CD4-positive, alpha-beta memory T cell (primary cell): ENCODE measurements at regions of chr1 and their contacts with region 1.

Region 1: DNA sequence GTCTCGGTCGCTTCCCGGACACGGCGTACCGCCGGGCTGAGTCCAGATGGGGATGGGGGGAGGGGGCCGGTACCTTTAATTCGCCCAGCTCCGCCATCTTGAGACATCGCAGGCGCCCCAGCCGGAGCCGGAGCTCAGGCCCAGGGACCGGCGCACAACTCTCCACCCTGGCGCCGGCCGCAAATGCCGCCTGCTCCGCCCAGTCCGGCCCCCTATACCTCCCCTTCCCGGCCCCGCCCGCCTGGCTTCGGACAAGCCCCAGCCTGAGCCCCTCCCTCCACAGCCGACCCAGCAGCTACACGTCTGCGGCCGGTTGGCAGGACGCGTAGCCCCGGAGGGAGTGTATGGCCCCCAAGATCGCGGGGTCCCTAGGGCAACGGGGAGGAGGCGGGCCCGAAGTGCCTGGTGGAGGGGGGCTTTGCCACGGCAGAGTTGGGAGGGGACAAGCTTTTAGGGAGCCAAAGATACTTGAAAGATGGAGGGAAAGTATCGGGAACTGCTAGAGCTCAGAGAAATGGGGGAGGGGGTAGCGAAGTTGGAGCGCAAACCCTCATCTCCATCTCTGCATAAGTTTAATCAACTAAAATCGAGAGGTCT is at the start of gene PIAS3:
- DNase-seq: peak; percentile 76 to 84 (median 80)
- H3K4me3 ChIP-seq: peak within 1 kb of the TSS; percentile 90 to 96
- H3K4me3 Mint-ChIP-seq: peak within 1 kb of the TSS; percentile 92 to 97 (median 96)
- H3K27ac ChIP-seq: peak within 1 kb of the TSS; percentile 74
- H3K27ac Mint-ChIP-seq: peak within 1 kb of the TSS; percentile 89 to 97 (median 90)
- H3K4me1 ChIP-seq: peaks cover 17% of the 10 kb centered on the region
- H3K4me1 Mint-ChIP-seq: peaks cover 8 to 29% (median 19%) of the 10 kb centered on the region in 4 donors
- H3K27me3 ChIP-seq: no peaks in the 10 kb centered on the region
- H3K27me3 Mint-ChIP-seq: peaks cover 0 to 2% of the 10 kb centered on the region in 2 donors
- total RNA-seq, gene PIAS3: 30.3 to 33.6 TPM

Region 2: GRCh38 chr1:145751491-145752037 is 107.4 kb before region 1 on chr1:
- CTCF ChIA-PET with region 1: no interaction called
- POLR2A ChIA-PET with region 1: no interaction called
- intact Hi-C with region 1: no loop called
- DNase-seq: peak in 1 of 5 donors; percentile 27
- H3K4me3 ChIP-seq: no peak overlapping the region
- H3K4me3 Mint-ChIP-seq: no peak overlapping the region
- H3K27ac ChIP-seq: no peak overlapping the region
- H3K27ac Mint-ChIP-seq: peak overlapping the region in 2 of 7 donors; percentile 27 to 42
- H3K4me1 ChIP-seq: no peaks in the 10 kb centered on the region
- H3K4me1 Mint-ChIP-seq: no peaks in the 10 kb centered on the region
- H3K27me3 ChIP-seq: no peaks in the 10 kb centered on the region
- H3K27me3 Mint-ChIP-seq: no peaks in the 10 kb centered on the region

Region 3: DNA sequence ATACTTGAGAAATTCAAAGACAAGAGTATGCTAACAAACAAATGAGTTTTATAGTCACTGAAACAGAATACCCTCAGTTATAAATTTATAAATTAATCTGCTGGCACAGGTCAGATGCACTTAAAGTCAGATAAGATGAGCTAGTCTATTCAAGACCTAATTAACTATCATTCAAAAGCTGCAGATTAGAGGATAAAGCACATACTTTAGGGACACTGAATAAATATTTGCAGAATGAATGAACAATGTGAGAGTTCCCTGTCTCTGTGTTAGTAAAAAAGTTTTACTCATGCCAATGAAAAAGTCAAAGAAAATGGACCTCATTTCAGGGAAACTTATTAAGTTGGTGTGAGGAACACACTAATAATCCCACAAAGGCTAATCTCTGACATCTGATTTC is 93.4 kb before region 1 on chr1:
- CTCF ChIA-PET with region 1: no interaction called
- POLR2A ChIA-PET with region 1: no interaction called
- intact Hi-C with region 1: no loop called
- DNase-seq: no peak
- H3K4me3 ChIP-seq: no peak overlapping the region
- H3K4me3 Mint-ChIP-seq: no peak overlapping the region
- H3K27ac ChIP-seq: no peak overlapping the region
- H3K27ac Mint-ChIP-seq: no peak overlapping the region
- H3K4me1 ChIP-seq: no peaks in the 10 kb centered on the region
- H3K4me1 Mint-ChIP-seq: peaks cover 0 to 3% (median 0%) of the 10 kb centered on the region in 4 donors
- H3K27me3 ChIP-seq: no peaks in the 10 kb centered on the region
- H3K27me3 Mint-ChIP-seq: no peaks in the 10 kb centered on the region

Region 4: DNA sequence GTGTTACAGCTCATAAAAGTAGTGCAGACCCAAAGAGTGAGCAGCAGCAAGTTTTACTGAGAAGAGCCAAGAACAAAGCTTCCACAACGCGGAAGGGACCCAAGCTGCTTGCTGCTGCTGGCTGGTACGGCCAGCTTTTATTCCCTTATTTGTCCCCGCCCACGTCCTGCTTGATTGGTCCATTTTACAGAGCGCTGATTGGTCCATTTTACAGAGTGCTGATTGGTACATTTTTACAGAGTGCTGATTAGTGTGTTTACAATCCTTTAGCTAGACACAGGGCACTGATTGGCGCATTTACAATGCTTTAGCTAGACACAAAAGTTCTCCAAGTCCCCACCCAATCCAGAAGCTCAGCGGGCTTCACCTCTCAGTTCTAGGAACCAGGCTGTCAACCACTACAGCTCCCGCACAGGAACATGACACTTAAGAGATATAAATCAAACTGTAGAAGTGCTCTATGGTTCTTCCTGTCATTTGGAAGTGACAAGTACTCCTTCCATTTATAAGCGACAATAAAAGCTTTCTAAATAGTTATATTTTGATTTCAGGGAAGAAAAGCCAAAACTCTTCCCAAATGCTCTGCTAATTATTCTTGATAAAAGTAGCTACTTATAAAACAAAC is 63.6 kb before region 1 on chr1:
- CTCF ChIA-PET with region 1: no interaction called
- POLR2A ChIA-PET with region 1: no interaction called
- intact Hi-C with region 1: no loop called
- DNase-seq: peak in 1 of 5 donors; percentile 28
- H3K4me3 ChIP-seq: no peak overlapping the region
- H3K4me3 Mint-ChIP-seq: no peak overlapping the region
- H3K27ac ChIP-seq: no peak overlapping the region
- H3K27ac Mint-ChIP-seq: peak overlapping the region in 1 of 7 donors; percentile 13
- H3K4me1 ChIP-seq: no peaks in the 10 kb centered on the region
- H3K4me1 Mint-ChIP-seq: peaks cover 10 to 21% (median 20%) of the 10 kb centered on the region in 4 donors
- H3K27me3 ChIP-seq: no peaks in the 10 kb centered on the region
- H3K27me3 Mint-ChIP-seq: no peaks in the 10 kb centered on the region

Region 5: DNA sequence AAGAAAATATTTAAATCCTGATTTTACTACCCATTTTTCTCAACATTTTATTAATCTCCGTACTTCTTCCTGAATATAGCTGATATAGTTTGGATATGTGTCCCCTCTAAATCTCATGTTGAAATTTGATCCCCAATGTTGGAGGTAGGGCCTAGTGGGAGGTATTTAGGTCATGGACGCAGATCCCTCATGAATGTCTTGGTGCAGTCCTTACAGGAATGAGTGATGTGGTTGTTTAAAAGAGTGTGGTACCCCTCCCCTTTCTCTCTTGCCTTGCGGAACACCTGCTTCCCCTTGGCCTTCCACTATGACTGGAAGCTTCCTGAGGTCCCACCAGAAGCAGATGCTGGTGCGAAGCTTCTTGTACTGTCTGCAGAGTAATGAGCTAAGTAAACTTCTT is 52.6 kb before region 1 on chr1:
- CTCF ChIA-PET with region 1: no interaction called
- POLR2A ChIA-PET with region 1: no interaction called
- intact Hi-C with region 1: no loop called
- DNase-seq: no peak
- H3K4me3 ChIP-seq: no peak overlapping the region
- H3K4me3 Mint-ChIP-seq: no peak overlapping the region
- H3K27ac ChIP-seq: no peak overlapping the region
- H3K27ac Mint-ChIP-seq: peak overlapping the region in 1 of 7 donors; percentile 4
- H3K4me1 ChIP-seq: no peaks in the 10 kb centered on the region
- H3K4me1 Mint-ChIP-seq: peaks cover 31 to 47% (median 39%) of the 10 kb centered on the region in 4 donors
- H3K27me3 ChIP-seq: no peaks in the 10 kb centered on the region
- H3K27me3 Mint-ChIP-seq: no peaks in the 10 kb centered on the region

Region 6: DNA sequence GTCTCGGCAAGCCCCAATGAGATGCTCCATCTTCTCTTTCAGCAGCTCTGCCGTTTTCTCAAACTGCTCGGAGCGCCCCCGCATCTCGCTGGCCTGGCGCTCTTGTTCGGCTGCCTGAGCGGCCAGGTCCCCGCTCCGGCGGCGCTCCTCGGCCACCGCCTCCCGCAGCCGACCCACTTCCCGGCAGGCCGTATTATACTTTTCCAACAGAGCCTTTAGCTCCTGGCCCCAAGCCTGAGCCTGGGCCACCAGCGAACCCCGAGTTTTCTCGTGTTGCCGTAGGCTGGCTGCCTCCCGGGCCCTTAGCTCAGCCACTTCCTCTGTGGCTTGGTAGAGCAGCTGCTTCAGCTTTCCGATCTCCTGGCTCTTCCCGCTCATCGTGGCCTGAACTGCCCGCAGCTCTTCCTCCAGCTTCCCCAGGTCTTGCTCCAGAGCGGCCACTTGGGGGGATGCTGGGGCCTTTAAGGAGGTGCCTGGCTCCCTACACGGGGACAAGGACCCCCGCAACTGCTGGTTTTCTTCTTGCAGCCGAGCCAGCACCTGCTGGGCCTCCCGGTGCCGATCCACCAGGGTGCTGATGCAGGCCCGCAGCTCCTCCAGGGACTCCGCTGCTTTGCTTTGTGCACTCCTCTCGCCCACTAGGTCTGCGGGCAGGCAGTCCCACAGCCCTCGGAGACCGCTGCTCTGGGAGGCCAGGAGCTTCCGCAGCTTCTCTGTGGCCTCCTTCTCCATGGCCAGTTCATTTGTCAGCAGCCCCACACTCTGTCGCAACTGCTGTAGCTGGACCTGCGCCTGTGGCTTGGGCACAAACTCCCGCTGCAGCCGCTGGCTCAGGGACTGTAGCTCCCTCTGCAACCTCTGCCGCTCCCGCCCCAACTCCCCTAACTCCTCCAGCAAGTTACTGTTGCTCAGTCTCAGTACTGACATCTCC is 13.3 kb after region 1 on chr1:
- CTCF ChIA-PET with region 1: interaction called, 16 read pairs
- POLR2A ChIA-PET with region 1: interaction called, 41 read pairs
- intact Hi-C with region 1: loop called (anchors 2 kb)
- DNase-seq: peak in 4 of 5 donors; percentile 31 to 42 (median 40)
- H3K4me3 ChIP-seq: peak overlapping the region in 1 of 2 donors; percentile 51
- H3K4me3 Mint-ChIP-seq: peak overlapping the region; percentile 75 to 84 (median 82)
- H3K27ac ChIP-seq: peak overlapping the region; percentile 11
- H3K27ac Mint-ChIP-seq: peak overlapping the region in 6 of 7 donors; percentile 38 to 81 (median 68)
- H3K4me1 ChIP-seq: peaks cover 14% of the 10 kb centered on the region
- H3K4me1 Mint-ChIP-seq: peaks cover 13 to 20% (median 17%) of the 10 kb centered on the region in 4 donors
- H3K27me3 ChIP-seq: no peaks in the 10 kb centered on the region
- H3K27me3 Mint-ChIP-seq: peaks cover 4 to 6% of the 10 kb centered on the region in 2 donors

Region 7: DNA sequence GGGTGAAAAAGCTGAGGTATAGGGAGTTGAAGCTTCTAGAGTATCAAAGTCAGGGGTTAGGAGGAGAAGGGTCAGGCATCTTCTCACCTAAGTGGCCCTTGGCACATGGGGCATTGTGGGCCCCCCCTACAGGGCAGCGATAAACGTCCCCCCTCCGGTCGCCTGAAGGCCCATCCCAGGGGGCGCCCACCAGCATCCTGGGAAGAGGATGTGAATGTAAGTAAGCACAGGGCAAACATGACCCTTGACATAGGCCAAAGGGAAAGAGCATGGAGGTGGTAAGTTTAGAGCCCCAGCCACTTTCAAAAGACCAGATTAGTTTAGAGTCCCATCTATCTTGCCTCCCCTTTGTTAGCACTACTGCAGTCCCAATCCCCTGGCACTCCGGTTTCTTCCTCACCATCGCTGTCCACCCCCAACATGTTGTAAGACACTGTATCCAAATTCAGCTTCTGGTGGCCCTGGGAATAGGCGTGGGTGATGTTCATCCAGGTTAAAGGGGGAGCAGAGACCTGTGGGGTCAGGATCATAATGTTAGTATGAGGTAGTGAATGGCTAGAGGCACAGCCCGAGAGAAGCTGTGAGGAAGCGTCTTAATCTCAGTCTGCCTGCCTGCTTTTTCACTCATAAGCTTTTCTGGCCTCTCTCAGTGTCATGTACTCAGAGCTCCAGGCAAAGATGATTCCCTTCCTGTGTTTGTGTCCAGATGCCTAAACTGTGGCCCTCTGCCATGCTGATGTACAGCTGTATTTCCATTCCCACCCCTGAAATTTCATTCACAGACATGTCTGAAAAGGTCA is 48.2 kb after region 1 on chr1:
- CTCF ChIA-PET with region 1: interaction called, 37 read pairs
- POLR2A ChIA-PET with region 1: interaction called, 3 read pairs
- intact Hi-C with region 1: no loop called
- DNase-seq: no peak
- H3K4me3 ChIP-seq: no peak overlapping the region
- H3K4me3 Mint-ChIP-seq: no peak overlapping the region
- H3K27ac ChIP-seq: no peak overlapping the region
- H3K27ac Mint-ChIP-seq: no peak overlapping the region
- H3K4me1 ChIP-seq: no peaks in the 10 kb centered on the region
- H3K4me1 Mint-ChIP-seq: peaks cover 4 to 5% (median 5%) of the 10 kb centered on the region in 4 donors
- H3K27me3 ChIP-seq: no peaks in the 10 kb centered on the region
- H3K27me3 Mint-ChIP-seq: no peaks in the 10 kb centered on the region

Region 8: DNA sequence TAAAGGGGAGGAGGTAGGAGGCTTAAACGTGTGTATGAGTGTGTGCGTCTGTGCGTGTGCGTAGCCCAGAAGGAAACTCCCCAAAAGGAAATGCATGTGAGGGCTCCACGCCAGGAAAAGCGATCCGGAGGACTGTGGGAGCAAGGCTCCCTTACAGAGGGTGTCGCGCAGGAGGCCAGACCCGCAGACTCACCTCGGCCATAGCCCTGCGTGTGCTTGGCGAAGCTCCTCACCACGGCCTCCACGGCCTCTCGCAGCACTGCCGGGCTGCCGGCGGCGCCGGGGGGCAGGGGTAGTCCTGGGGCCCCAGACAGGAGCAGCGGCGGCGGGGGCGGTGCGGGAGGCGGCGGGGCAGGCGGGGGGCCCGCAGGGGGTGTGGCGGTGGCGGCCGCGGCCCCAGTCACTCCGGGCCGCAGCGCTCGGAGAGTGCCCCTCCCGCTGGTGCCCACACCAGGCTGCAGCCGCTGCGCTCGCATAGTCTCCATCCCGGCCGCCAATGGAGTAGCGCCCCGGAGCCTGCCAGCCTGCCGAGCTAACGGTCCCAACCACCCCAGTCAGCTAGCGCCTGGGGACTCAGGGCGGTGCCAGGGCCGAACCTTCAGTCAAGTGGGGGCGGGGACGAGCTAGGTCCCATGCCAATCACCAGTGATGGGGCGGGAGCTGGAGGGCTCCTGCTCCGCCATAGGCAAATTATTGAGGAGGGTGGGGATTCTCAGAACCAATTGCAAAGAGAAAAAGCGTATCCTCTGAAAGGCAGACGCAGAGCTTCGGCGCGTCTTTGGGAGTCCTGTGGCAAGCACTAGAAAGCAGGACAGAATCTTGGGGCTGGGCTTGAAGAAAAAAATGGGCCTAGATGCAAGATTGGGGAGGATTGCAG is 98.7 kb after region 1 on chr1 and contains the start of gene LIX1L:
- CTCF ChIA-PET with region 1: interaction called, 4 read pairs
- POLR2A ChIA-PET with region 1: interaction called, 14 read pairs
- intact Hi-C with region 1: no loop called
- DNase-seq: peak; percentile 92 to 98 (median 94)
- H3K4me3 ChIP-seq: peak within 1 kb of the TSS; percentile 31 to 63
- H3K4me3 Mint-ChIP-seq: peak within 1 kb of the TSS; percentile 89 to 99 (median 96)
- H3K27ac ChIP-seq: peak within 1 kb of the TSS; percentile 81
- H3K27ac Mint-ChIP-seq: peak within 1 kb of the TSS; percentile 89 to 99 (median 97)
- H3K4me1 ChIP-seq: peaks cover 65% of the 10 kb centered on the region
- H3K4me1 Mint-ChIP-seq: peaks cover 55 to 88% (median 65%) of the 10 kb centered on the region in 4 donors
- H3K27me3 ChIP-seq: no peaks in the 10 kb centered on the region
- H3K27me3 Mint-ChIP-seq: no peaks in the 10 kb centered on the region
- total RNA-seq, gene LIX1L: 64.5 to 66.1 TPM

Region 9: DNA sequence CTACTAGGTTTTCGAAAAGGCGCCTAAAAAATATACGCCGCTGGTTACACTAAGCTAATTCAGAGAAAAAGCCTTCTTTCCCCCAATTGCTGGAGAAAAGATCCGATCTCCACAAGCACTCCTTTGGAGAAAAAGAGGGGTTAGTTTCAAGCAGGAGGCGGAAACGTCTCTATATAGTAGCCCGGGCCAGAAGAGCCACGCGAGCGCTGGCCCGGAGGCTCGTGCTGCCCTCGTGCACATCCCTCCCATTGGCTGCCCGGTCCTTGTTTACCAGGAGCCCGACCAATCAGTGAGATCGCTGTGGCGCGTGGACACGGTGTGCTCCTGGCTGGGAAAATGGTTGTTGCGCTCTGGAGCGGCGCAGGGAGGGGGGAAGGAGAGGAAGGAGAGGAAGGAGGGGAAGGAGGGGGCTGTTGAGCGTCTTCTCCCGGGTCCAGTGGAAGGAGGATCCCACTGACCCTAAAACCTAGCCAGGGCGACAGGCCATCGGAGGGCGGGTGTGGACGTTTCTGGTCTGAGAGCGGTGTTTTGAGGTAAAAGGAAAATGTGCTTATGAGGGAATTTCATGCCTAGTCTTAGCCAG is 137.5 kb after region 1 on chr1 and contains the start of gene TXNIP:
- CTCF ChIA-PET with region 1: interaction called, 3 read pairs
- POLR2A ChIA-PET with region 1: interaction called, 44 read pairs
- intact Hi-C with region 1: no loop called
- DNase-seq: peak; percentile 90 to 96 (median 94)
- H3K4me3 ChIP-seq: peak within 1 kb of the TSS; percentile 97 to 99
- H3K4me3 Mint-ChIP-seq: peak within 1 kb of the TSS; percentile 96 to 99 (median 98)
- H3K27ac ChIP-seq: peak within 1 kb of the TSS; percentile 75
- H3K27ac Mint-ChIP-seq: peak within 1 kb of the TSS; percentile 96 to 99 (median 97)
- H3K4me1 ChIP-seq: peaks cover 62% of the 10 kb centered on the region
- H3K4me1 Mint-ChIP-seq: peaks cover 39 to 89% (median 50%) of the 10 kb centered on the region in 4 donors
- H3K27me3 ChIP-seq: no peaks in the 10 kb centered on the region
- H3K27me3 Mint-ChIP-seq: no peaks in the 10 kb centered on the region
- total RNA-seq, gene TXNIP: 933 to 985 TPM